OCI-LY7 (cell line): ENCODE measurements at regions of chr6 and their contacts with region 1.

Region 1: DNA sequence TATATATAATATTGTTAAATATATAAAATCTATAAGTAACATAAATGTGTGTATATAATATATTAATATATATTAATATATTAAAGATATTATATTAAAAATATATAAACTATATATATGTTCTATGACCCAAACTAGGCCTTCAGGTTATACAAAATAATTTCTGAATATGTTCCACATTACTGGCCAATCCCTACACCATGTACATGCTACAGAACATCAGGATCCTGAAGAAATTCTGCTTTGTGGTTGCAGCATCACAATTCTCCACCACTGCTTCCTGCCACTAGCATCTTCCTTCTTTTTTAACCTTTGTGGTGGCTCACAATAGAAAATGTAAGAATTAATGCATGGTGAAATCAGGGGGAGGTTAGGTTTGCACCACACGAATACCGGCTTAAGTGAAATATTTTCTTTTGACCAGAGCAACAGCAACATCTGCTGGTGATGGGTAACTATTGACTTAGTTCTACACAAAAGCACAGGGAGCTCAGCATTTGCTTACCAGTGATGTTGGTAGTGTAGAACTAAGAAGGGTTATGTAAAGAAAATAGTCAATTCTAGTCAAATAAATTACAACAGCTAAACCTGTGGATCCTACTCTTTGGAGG is 280.6 kb downstream of the SYNE1 start:
- DNase-seq: peak; percentile 48
- H3K4me3 ChIP-seq: no peak overlapping the region
- H3K27ac ChIP-seq: no peak overlapping the region
- H3K4me1 ChIP-seq: no peaks in the 10 kb centered on the region
- CTCF ChIP-seq: peak; percentile 73

Region 2: GRCh38 chr6:152206072-152206818 is 150.3 kb before region 1 on chr6:
- CTCF ChIA-PET with region 1: no interaction called
- POLR2A ChIA-PET with region 1: interaction called, 3 read pairs
- intact Hi-C with region 1: loop called (anchors 5 kb)
- DNase-seq: peak; percentile 32
- H3K4me3 ChIP-seq: no peak overlapping the region
- H3K27ac ChIP-seq: no peak overlapping the region
- H3K4me1 ChIP-seq: no peaks in the 10 kb centered on the region
- CTCF ChIP-seq: peak; percentile 81